ENCODE measurements at regions of chr1 and their contacts with region 1.

Region 1: DNA sequence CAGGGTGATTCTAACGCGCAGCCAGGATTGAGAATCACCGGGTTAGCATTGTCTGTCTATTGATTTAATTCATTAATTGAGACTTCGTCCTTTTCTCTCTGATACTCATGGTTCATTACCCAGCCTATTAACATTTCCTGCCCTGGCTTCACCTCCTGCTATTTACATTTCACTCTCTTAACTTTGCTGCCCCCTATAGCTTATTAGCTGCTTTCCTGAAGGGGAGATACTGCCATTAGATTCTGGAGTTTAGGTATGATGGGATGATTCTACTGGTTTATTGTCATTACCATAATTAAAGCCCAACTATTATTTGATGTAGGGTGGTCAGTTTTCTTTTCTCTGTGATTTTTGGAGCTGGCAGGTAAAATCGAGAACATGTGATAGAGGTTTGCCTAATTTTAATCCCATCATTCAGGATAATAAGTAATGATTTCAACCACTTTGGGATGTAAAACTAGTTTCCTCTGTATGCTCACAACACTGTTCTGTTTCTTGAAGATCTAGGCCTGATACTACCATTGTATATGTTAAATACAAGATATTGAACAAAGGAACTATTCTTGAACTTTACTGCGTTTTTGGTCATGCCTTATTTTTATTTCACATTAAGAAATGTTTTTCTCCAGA is 6.4 kb downstream of the PPP2R5A start:
- DNase-seq: no peak
- H3K4me3 ChIP-seq: peak overlapping the region in 2 of 4 donors; percentile 1 to 7
- H3K27ac ChIP-seq: peak overlapping the region in 1 of 4 donors; percentile 16
- H3K4me1 ChIP-seq: peaks cover 77 to 93% (median 81%) of the 10 kb centered on the region in 4 donors
- H3K27me3 ChIP-seq: no peaks in the 10 kb centered on the region
- CTCF ChIP-seq: peak; percentile 53 to 57 (median 56)
- EP300 ChIP-seq: no peak
- POLR2A ChIP-seq: no peak

Region 2: GRCh38 chr1:212229654-212230053 is 62.0 kb before region 1 on chr1:
- intact Hi-C with region 1: no loop called
- DNase-seq: no peak
- H3K4me3 ChIP-seq: no peak overlapping the region
- H3K27ac ChIP-seq: no peak overlapping the region
- H3K4me1 ChIP-seq: peaks cover 7 to 16% (median 11%) of the 10 kb centered on the region in 4 donors
- H3K27me3 ChIP-seq: no peaks in the 10 kb centered on the region
- CTCF ChIP-seq: no peak
- EP300 ChIP-seq: no peak
- POLR2A ChIP-seq: no peak

Region 3: GRCh38 chr1:212368073-212368484 is 76.5 kb after region 1 on chr1:
- intact Hi-C with region 1: loop called (anchors 5 kb)
- DNase-seq: no peak
- H3K4me3 ChIP-seq: no peak overlapping the region
- H3K27ac ChIP-seq: no peak overlapping the region
- H3K4me1 ChIP-seq: peaks cover 8 to 38% (median 33%) of the 10 kb centered on the region in 4 donors
- H3K27me3 ChIP-seq: no peaks in the 10 kb centered on the region
- CTCF ChIP-seq: peak; percentile 77 to 95 (median 82)
- EP300 ChIP-seq: no peak
- POLR2A ChIP-seq: no peak

Measured in esophagus muscularis mucosa (tissue), 4 donors.